Posterior vena cava (tissue), 2 donors: ENCODE measurements at regions of chr2 and their contacts with region 1.

Region 1: DNA sequence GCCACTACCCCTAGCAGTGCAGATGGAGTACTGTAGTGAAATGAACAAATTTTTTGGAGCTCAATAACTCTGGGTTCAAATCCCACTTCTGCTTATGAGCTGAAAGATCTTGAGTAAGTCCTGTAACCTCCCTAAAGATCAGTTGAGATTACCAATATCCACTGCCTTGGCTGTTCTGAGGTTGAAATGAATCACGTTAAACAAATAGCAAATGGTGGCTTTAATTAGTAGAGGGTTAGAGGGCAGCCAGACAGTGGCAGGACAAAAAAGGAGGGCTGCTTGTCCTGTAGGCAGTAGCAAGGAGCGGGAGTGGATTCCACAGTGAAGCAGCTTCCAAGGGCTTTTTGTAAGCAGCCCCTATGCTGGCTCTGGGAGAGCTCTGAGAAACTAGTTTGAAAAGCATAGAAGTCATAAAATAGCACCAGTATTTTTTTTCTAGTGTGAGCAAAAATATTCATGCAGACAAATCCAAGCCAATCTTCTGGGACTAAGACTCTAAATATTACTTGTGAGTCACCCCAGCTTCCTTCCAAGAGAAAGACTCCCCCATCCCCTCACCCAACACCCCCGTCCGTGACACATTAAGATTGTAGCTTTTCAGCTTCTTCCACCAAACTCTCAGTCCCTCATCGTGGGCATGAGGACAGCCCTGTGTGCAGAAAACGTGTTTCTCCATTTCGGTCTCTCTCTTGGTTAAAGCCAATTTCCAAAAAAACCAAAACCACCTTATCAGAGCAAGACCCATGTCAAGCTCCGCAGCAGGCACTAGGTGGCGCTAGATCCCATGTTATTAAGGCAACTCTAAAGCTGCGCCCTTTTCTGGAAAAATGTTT is 123.5 kb upstream of the LGALSL start:
- DNase-seq: peak; percentile 92

Region 2: DNA sequence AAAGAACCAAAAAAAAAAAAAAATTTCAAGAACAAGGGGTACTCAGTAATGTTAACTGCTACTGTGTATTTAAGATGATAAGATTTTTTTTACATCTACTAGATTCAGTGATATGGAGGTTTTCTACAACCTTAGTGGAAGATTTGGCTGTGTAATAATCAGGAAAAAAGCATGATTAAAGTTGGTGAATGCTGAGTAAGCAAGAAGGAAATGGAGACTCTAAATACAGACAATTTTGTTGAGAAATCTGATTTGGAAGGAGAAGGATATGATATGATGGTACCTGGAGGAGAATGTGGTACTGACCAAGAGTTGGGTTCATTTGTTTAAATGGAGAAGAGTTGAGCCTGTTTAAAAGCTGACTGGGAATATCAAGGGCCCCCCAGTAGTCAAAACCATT is 867.4 kb before region 1 on chr2:
- intact Hi-C with region 1: no loop called
- DNase-seq: no peak

Region 3: GRCh38 chr2:64052468-64053241 is 277.8 kb before region 1 on chr2:
- intact Hi-C with region 1: loop called (anchors 1 to 5 kb)
- DNase-seq: no peak

Region 4: DNA sequence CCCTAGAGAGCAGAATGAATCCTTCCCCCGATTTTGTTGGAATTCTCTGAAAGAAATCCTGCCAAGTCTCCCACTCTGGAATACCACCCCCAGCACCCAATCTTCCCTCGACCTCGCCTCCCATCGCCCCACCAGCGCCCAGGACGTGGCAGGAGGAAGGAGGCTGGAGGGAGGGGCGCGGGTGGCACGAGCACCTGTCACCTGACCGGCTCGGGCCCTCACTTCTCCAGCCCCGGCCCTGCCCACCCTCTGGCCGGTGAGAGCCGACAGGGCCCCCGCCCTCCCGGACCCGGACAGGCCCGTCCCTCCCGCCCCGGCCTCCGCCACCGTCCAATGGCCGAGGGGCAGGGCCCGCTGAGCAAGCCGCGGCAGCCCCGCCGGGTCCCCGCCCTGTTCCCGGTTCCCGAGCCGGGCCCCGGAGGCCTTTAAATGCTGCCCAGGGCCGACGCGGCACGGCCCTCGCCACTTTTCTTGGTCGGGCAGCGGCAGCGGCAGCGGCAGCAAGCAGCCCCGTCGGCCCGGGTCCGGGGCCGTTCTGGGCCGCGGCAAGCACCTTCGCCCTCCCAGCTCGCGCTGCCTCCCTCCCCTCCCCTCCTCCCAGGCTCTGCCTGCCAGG is 123.4 kb after region 1 on chr2 and contains the start of gene LGALSL:
- intact Hi-C with region 1: loop called in 1 of 2 experiments (anchors 10 kb)
- DNase-seq: peak; percentile 90
- total RNA-seq, gene LGALSL: 20.5 to 23.4 TPM

Region 5: GRCh38 chr2:64488050-64488974 is 157.8 kb after region 1 on chr2:
- intact Hi-C with region 1: loop called (anchors 5 kb)
- DNase-seq: peak; percentile 91